A549 (cell line): ENCODE measurements at regions of chr19 and their contacts with region 1.

Region 1: GRCh38 chr19:2578901-2579677 is 103.2 kb downstream of the GADD45B start:
- DNase-seq: peak; percentile 74 to 94
- ATAC-seq: peak; percentile 88 to 92
- H3K4me3 ChIP-seq: peak overlapping the region; percentile 35
- H3K27ac ChIP-seq: peak overlapping the region; percentile 96
- H3K4me1 ChIP-seq: peaks cover 35% of the 10 kb centered on the region
- CTCF ChIP-seq: peak; percentile 82
- EP300 ChIP-seq: peak; percentile 27 to 69; a peak in 3 of 5 replicates
- POLR2A ChIP-seq: no peak
- RAD21 ChIP-seq: peak; percentile 91 to 93

Region 2: DNA sequence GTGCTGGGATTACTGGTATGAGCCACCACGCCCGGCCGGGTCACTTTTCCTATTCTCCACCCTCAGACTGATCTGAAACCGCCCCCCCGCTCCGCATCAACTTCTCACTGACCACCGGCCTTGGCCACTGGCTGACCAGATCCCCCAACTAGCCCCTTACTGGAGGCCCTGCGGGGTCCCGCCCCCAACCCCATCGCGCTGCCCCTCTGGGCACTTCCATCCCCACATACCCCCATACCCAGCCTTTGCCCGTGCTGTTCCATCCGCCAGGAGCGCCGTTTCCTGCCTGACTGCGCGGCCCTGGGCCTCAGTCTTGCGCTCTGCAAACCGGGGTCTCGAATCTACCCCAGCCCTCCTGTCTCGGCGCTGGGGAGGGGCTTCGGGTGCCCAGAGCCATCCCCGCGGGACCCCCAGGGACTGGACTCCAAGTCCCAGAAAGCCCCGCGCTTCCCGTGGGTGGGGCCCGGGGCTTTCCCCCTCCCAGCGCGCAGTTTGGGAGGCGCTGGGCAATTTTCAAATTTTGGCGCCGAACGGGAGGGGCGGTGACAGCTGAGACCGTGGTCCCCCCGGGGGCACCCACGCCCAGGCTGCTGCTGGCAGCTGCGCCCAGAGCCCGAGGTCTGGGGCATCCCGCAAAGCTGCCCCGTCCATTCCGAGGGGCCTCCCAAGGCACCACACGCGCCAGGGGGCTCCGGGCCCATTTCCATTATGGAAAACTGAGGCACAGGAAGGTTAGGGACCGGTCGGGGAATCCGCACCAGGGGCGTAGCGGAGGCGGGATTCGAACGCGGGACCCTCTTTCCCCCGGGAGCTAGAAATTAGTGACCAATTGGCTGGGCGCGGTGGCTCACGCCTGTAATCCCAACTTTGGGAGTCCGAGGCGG is 117.1 kb before region 1 on chr19:
- CTCF ChIA-PET with region 1: interaction called, 16 read pairs
- POLR2A ChIA-PET with region 1: no interaction called
- DNase-seq: peak in 1 of 2 experiments; percentile 85
- ATAC-seq: peak; percentile 76 to 84
- H3K4me3 ChIP-seq: peak overlapping the region; percentile 58
- H3K27ac ChIP-seq: peak overlapping the region; percentile 88 to 98
- H3K4me1 ChIP-seq: 0 out of 3 replicates have a peak, but pooled peaks cover 6% of the 10 kb centered on the region
- CTCF ChIP-seq: no peak
- EP300 ChIP-seq: no peak
- POLR2A ChIP-seq: no peak
- RAD21 ChIP-seq: no peak

Region 3: DNA sequence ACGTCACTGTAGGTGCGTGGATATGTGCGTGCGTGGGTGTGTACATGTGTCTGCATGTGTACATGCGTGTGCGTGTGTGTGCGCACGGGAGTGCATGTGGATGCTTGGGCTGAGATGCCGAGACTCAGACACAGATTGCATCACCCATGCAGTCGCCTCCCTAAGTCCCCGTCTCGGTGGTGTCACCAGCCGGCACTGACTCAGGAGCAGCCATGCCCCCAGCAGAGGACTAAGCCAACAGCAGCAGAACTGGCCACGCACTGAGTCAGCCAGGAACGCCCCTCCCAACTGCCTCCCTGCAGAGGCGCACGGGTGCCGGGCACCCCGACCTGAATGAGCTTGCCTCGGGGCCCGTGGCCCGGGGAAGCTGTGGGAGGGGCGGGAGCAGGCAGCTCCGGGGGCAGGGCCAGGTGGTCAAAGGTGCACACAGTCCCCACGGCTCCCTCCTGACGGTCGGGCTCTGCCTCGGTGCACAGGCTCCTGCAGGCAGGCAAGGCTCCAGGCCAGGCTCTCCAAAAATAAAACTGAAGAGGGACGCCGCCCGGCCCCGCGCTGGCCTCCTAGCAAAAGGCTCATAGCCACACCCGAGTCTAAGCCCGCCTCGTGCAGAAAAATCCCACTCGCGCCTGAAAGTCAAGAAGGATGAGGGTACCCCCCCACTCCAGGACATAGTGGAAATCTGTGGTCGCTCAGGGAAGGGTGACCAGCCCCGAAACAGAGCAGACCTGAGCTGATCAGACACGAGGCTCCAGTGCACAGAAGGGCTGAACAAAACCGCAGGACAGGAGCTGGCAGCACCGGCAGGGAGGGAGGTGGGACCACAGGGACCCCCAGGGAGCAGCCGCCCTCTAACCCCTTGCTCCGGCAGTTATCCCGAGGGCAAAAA is 54.0 kb before region 1 on chr19:
- CTCF ChIA-PET with region 1: interaction called, 9 read pairs
- POLR2A ChIA-PET with region 1: interaction called, 11 read pairs
- DNase-seq: peak; percentile 74 to 86
- ATAC-seq: peak; percentile 82 to 91
- H3K4me3 ChIP-seq: peak overlapping the region; percentile 31
- H3K27ac ChIP-seq: peak overlapping the region; percentile 97 to 99
- H3K4me1 ChIP-seq: peaks cover 53% of the 10 kb centered on the region
- CTCF ChIP-seq: no peak
- EP300 ChIP-seq: peak; percentile 59 to 77; a peak in 3 of 5 replicates
- POLR2A ChIP-seq: no peak
- RAD21 ChIP-seq: peak; percentile 4 to 36; a peak in 2 of 5 replicates

Region 4: DNA sequence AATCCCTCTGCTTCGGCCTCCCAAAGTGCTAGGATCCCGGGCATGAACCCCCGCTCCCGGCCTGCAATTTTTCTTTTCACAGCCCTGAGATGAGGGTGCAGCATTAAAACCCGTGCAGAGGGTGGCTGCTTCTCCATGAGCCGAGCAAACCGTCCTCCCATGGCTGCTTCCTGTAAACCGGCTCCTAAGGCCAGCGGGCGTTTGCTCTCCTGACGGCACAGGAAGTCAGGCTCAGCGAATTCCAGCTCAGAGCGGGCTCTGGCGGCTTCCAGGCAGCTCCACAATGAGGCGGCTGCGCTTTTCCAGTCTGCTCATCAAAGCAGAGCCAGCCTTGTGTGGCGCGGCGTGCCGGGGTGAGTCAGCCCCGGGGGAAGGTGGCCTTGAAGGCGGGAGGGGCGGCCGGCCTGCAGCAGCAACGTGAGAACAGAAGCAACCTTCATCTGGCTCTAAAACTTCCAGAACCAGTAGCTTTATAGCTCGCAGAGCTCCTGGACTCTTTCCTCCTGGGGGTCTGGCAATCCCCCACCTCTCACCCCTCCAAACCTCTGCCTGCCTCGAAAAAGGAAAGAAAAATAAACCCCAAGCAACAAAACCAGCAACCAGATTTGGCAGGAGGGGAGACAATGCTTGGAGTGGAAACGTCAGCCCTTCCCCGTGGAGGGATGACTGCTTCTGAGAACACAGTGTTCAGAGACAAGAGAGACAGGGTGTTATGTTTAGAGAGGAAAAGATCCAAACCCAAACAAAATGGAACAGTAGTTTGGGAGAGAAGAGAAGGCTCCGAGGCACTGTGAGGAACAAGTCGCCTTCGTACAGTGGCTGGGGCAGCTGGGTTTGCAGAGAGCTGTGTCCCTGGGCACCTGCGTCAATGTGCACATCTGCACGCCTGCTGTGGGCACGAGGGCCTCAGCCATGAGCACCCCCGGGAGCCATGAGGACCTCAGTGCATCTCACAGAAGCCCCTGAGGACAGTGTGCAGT is 35.3 kb before region 1 on chr19:
- CTCF ChIA-PET with region 1: interaction called, 47 read pairs
- POLR2A ChIA-PET with region 1: interaction called, 35 read pairs
- DNase-seq: peak; percentile 73 to 93
- ATAC-seq: peak; percentile 81 to 82
- H3K4me3 ChIP-seq: peak overlapping the region; percentile 33; the same call in 2 of the 3 replicates
- H3K27ac ChIP-seq: peak overlapping the region; percentile 97 to 100
- H3K4me1 ChIP-seq: peaks cover 64% of the 10 kb centered on the region
- CTCF ChIP-seq: no peak
- EP300 ChIP-seq: peak in 1 of 2 experiments; percentile 37; a peak in 1 of 5 replicates
- POLR2A ChIP-seq: no peak
- RAD21 ChIP-seq: peak; percentile 39 to 58

Region 5: DNA sequence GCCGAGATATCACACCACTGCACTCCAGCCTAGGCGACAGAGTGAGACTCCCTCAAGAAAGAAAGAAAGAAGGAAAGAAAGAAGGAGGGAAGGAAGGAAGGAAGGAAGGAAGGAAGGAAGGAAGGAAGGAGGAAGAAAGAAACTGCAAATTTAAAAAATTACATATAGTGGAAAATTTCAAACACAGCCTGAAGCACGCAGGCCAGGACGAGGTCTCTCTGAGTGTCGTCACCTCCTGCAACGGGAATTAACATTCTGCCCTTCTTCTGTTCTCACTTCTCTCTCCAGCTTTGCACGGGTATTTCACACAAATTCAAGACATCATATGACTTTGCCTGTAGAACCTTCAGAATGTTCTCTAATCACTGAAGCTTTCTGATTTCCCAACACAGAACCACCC is 15.2 kb after region 1 on chr19:
- CTCF ChIA-PET with region 1: interaction called, 18 read pairs
- POLR2A ChIA-PET with region 1: interaction called, 8 read pairs
- DNase-seq: no peak
- ATAC-seq: no peak
- H3K4me3 ChIP-seq: no peak overlapping the region
- H3K27ac ChIP-seq: no peak overlapping the region
- H3K4me1 ChIP-seq: peaks cover 17% of the 10 kb centered on the region
- CTCF ChIP-seq: no peak
- EP300 ChIP-seq: no peak
- POLR2A ChIP-seq: no peak
- RAD21 ChIP-seq: no peak

Region 6: GRCh38 chr19:2610637-2611482 is 31.8 kb after region 1 on chr19:
- CTCF ChIA-PET with region 1: interaction called, 65 read pairs
- POLR2A ChIA-PET with region 1: interaction called, 14 read pairs
- DNase-seq: peak; percentile 56 to 85
- ATAC-seq: peak; percentile 93 to 95
- H3K4me3 ChIP-seq: peak overlapping the region; percentile 37
- H3K27ac ChIP-seq: peak overlapping the region; percentile 94 to 98
- H3K4me1 ChIP-seq: peaks cover 15% of the 10 kb centered on the region; the same call in 2 of the 3 replicates
- CTCF ChIP-seq: peak; percentile 82
- EP300 ChIP-seq: no peak
- POLR2A ChIP-seq: no peak
- RAD21 ChIP-seq: peak; percentile 94 to 98

Region 7: GRCh38 chr19:2648528-2648937 is 69.4 kb after region 1 on chr19:
- CTCF ChIA-PET with region 1: no interaction called
- POLR2A ChIA-PET with region 1: no interaction called
- DNase-seq: peak; percentile 68 to 82
- ATAC-seq: peak; percentile 90 to 93
- H3K4me3 ChIP-seq: no peak overlapping the region
- H3K27ac ChIP-seq: no peak overlapping the region
- H3K4me1 ChIP-seq: no peaks in the 10 kb centered on the region
- CTCF ChIP-seq: peak; percentile 73
- EP300 ChIP-seq: no peak
- POLR2A ChIP-seq: no peak
- RAD21 ChIP-seq: peak; percentile 91 to 96